ENCODE measurements at regions of chr4 and their contacts with region 1.

Region 1: DNA sequence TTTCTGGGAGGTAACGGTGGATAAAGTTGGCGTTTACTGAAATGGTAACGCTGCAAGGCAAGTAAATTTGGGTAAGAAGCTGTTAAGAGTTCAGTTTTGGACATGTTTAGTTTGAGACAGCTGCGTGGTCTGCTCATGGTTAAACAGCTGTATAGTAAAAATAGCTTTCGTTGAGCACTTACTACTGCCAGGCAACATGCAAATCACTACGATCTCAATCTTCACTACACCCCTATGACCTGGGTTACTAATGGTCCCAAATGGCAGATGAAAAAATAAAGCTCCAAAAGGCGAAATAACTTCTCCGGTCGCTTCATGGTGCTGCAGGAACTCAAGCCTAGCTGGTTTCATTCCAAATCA is 22.2 kb downstream of the FABP2 start:
- DNase-seq: no peak
- ATAC-seq: peak; percentile 3 to 20 (median 15)
- H3K4me3 ChIP-seq: peak overlapping the region; percentile 38 to 76 (median 74)
- H3K27ac ChIP-seq: peak overlapping the region; percentile 81 to 97 (median 90)
- H3K4me1 ChIP-seq: peaks cover 0 to 14% (median 12%) of the 10 kb centered on the region in 3 donors
- H3K27me3 ChIP-seq: no peaks in the 10 kb centered on the region
- CTCF ChIP-seq: no peak

Region 2: DNA sequence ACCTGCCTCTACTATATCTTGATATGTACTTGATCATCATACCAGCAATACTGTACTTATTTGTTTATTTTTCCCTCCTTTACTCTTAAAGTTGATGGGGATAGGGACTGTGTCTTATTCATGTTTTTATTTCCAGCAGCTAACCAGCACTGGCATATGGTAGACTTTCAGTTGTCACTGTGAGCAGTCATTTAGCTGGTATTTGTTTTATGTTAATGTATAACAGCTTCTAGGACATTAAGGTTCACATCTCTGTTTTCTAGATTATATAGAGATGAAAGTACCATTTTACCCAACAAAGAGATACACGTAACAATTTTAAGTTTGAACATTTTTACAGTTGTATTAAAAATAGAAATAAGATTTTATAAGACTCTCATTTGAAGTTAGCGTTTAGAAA is 596.6 kb before region 1 on chr4:
- intact Hi-C with region 1: no loop called
- DNase-seq: no peak
- ATAC-seq: peak in 3 of 4 donors; percentile 79 to 91 (median 89)
- H3K4me3 ChIP-seq: no peak overlapping the region
- H3K27ac ChIP-seq: no peak overlapping the region
- H3K4me1 ChIP-seq: peaks cover 0 to 17% (median 15%) of the 10 kb centered on the region in 3 donors
- H3K27me3 ChIP-seq: no peaks in the 10 kb centered on the region
- CTCF ChIP-seq: no peak

Region 3: DNA sequence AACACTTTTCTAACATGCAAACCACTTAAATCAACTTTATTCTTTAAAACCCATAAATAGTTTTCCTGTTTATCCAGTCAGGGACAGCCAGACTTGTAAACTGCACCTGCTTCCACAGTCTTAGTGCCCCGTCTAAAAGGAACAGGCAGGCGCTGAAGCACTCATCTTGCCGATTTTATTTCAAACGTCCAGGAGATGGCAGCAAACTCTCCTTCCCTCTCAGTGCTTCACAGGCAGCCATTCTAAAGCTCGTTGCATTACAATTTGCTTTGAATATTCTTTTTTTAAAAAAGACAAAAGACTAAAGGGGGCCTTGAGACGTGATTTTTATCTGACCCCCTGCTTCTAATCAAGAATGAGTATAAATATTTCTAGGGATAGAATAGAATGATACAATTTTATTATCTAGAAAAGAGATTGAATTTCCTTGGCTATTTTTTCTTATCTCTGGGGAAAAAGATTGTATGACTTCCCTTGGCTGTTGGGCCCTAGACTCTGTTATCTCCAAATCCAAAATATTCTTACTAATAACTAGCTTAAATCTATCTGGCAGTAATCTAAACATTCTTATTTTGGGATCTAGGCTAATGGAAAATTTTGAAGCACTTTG is 257.7 kb before region 1 on chr4:
- intact Hi-C with region 1: loop called in 1 of 3 experiments (anchors 10 kb)
- DNase-seq: peak in 3 of 6 donors; percentile 38 to 63 (median 38)
- ATAC-seq: peak; percentile 92 to 96 (median 94)
- H3K4me3 ChIP-seq: no peak overlapping the region
- H3K27ac ChIP-seq: no peak overlapping the region
- H3K4me1 ChIP-seq: no peaks in the 10 kb centered on the region
- H3K27me3 ChIP-seq: no peaks in the 10 kb centered on the region
- CTCF ChIP-seq: peak in 3 of 4 donors; percentile 38 to 53 (median 47)

Region 4: GRCh38 chr4:119136546-119136945 is 163.2 kb before region 1 on chr4:
- intact Hi-C with region 1: no loop called
- DNase-seq: no peak
- ATAC-seq: no peak
- H3K4me3 ChIP-seq: no peak overlapping the region
- H3K27ac ChIP-seq: no peak overlapping the region
- H3K4me1 ChIP-seq: peaks cover 11 to 26% (median 17%) of the 10 kb centered on the region in 3 donors
- H3K27me3 ChIP-seq: no peaks in the 10 kb centered on the region
- CTCF ChIP-seq: no peak

Region 5: GRCh38 chr4:119220751-119221150 is 79.0 kb before region 1 on chr4:
- intact Hi-C with region 1: no loop called
- DNase-seq: no peak
- ATAC-seq: no peak
- H3K4me3 ChIP-seq: no peak overlapping the region
- H3K27ac ChIP-seq: no peak overlapping the region
- H3K4me1 ChIP-seq: peaks cover 0 to 15% (median 4%) of the 10 kb centered on the region in 3 donors
- H3K27me3 ChIP-seq: no peaks in the 10 kb centered on the region
- CTCF ChIP-seq: no peak